CD14-positive monocyte (primary cell): ENCODE measurements at regions of chr3 and their contacts with region 1.

Region 1: DNA sequence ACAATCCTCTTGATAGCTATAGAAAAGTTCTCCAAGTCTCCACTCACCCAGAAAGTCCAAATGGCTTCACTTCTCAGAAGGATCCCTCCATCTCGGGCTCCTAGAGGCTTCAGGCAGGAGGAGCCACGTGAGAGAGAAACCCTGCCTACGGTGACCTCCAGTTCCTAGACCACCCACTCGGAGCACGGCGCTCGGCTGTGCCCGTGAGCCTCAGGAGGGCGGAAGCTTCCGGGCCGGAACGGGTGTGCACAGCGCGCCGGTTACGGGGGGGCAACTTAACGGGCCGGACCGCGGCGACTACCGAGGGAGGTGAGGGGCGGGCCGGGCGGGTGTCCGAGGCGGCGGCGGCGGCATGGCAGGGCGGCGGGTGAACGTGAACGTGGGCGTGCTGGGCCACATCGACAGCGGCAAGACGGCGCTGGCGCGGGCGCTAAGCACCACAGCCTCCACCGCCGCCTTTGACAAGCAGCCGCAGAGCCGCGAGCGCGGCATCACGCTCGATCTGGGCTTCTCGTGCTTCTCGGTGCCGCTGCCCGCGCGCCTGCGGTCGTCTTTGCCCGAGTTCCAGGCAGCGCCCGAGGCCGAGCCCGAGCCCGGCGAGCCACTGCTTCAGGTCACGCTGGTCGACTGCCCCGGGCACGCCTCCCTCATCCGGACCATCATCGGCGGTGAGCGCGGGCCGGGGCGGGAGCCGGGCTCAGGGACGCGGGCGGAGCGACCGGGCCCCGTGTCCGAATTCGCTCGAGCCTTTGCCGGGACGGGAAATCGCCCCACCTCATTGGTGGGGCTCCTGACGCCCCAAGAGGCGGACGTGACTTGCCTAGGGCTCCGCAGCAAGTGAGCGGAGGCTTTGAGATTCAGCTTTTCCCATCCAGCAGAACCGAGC is at the start of gene EEFSEC:
- DNase-seq: peak; percentile 53 to 74 (median 66)
- H3K4me3 ChIP-seq: peak within 1 kb of the TSS; percentile 54 to 91 (median 88)
- H3K4me3 Mint-ChIP-seq: peak within 1 kb of the TSS; percentile 90 to 92
- H3K27ac ChIP-seq: peak within 1 kb of the TSS; percentile 57 to 81
- H3K27ac Mint-ChIP-seq: peak within 1 kb of the TSS; percentile 76 to 93 (median 91)
- H3K4me1 ChIP-seq: peaks cover 31 to 34% of the 10 kb centered on the region in 2 donors
- H3K4me1 Mint-ChIP-seq: peaks cover 33% of the 10 kb centered on the region
- H3K27me3 ChIP-seq: no peaks in the 10 kb centered on the region
- H3K27me3 Mint-ChIP-seq: peaks cover 0 to 5% (median 2%) of the 10 kb centered on the region in 3 donors
- CTCF ChIP-seq: no peak
- polyA plus RNA-seq, gene EEFSEC: 13.3 to 14.9 (median 14.9) TPM

Region 2: DNA sequence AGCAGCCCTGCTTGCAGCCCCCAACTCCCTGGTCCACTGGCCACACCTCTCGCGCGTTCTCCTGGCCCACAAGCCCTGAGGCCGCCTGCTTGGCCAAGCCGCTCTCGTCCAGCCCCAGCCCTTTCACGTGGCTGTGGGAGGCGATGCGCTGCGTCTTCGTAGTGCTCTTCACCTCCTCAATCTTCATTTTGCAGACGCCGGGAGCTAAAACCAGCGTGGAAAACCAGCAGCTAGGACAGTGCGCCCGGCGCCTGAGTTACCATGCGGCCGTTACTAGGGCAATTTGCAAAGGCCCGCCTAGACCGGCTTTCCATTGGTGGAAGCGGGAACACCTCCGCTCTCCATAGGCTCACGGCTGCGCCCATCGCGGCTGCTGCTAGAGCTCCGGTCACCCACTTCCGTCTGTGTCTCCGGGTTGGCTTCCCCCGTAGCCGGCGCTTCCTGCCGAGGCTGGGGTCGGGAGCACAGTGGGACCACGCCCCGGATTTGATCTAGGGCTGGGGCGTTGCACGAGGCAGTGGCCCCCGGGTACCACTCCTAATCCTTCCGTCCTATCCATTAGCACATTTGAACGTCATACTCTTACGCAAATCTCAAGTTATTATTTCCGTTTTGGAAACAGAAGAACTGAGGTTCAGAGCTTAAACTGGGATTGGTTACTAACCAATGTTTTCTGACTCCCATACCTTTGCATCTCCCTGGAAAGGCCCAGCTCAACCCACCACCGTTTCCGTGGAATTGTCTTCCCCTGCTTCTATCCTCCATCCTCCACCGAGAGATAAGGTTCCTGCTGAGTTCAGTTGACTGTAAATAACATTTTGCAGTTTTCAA is 29.6 kb before region 1 on chr3 and contains the start of gene RUVBL1:
- intact Hi-C with region 1: loop called in 1 of 2 experiments (anchors 2 kb)
- DNase-seq: peak; percentile 95 to 98 (median 97)
- H3K4me3 ChIP-seq: peak within 1 kb of the TSS; percentile 60 to 88 (median 85)
- H3K4me3 Mint-ChIP-seq: peak within 1 kb of the TSS; percentile 93 to 96
- H3K27ac ChIP-seq: peak within 1 kb of the TSS; percentile 65 to 85
- H3K27ac Mint-ChIP-seq: peak within 1 kb of the TSS; percentile 90 to 96 (median 94)
- H3K4me1 ChIP-seq: peaks cover 18 to 19% of the 10 kb centered on the region in 2 donors
- H3K4me1 Mint-ChIP-seq: peaks cover 25% of the 10 kb centered on the region
- H3K27me3 ChIP-seq: no peaks in the 10 kb centered on the region
- H3K27me3 Mint-ChIP-seq: peaks cover 0 to 1% (median 0%) of the 10 kb centered on the region in 3 donors
- CTCF ChIP-seq: no peak
- polyA plus RNA-seq, gene RUVBL1: 11.0 to 16.2 (median 14.4) TPM